Activated naive CD4-positive, alpha-beta T cell treated with anti-CD3 and anti-CD28 coated beads for 36 hours (primary cell): ENCODE measurements at regions of chr1 and their contacts with region 1.

Region 1: GRCh38 chr1:17653728-17654351 is 101.3 kb upstream of the ACTL8 start:
- DNase-seq: peak; percentile 50
- H3K4me3 Mint-ChIP-seq: no peak overlapping the region
- H3K27ac Mint-ChIP-seq: no peak overlapping the region
- H3K4me1 Mint-ChIP-seq: no peaks in the 10 kb centered on the region
- H3K27me3 Mint-ChIP-seq: no peaks in the 10 kb centered on the region

Region 2: DNA sequence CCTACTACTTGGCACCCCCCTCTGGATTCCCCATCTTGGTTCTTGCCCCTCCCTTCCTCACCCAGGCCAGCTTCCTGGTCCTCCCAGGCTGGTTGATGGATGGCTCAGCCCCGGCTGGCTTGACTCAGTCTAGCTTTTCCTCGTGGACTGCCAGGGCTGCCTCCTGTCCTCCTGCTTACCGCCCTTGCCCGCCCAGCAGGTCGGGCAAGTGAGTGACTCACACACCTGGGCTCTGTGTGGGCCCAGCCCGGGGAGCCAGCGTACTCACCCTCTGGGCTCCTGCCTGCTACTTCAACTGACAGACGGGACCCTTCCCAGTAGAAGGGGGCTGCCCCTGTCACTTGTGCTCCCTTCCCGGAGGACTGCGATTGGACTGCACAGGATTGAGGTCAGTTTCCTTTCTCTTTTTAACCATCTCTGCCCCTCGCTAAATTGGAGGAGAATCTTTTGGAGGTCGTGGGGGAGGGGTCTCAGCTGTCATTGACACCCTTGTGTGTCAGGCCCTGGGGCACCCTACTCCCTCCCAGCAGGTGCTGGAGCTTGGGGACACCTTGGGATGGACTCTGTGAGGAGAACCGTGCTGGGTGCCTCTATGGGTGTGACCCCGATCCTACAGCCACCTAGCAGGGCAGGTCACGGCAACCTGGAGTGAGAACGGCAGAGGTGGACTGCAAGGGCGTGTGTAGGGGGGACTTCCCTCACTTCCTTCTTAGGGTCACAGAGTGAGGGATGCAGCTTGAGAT is 133.6 kb before region 1 on chr1:
- CTCF ChIA-PET with region 1: no interaction called
- intact Hi-C with region 1: no loop called
- DNase-seq: no peak
- H3K4me3 Mint-ChIP-seq: no peak overlapping the region
- H3K27ac Mint-ChIP-seq: no peak overlapping the region
- H3K4me1 Mint-ChIP-seq: no peaks in the 10 kb centered on the region
- H3K27me3 Mint-ChIP-seq: peaks cover 18% of the 10 kb centered on the region

Region 3: DNA sequence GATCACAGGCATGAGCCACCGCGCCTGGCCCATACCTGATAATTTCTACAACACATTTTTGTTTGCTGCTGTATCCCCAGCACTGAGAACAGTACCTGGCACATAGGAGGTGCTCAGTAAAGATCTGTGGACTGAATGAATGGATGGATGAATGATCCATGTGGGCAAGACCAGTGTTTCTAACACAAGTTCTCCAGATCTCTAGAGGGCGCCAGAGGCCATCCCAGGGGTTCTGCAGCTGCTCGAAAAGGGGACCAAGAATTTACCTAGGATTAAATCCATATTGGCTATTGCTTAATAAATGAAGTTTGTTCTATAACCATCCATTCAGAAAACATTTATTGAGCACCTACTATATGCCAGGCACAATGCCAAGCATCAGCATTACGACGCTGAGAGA is 269.0 kb after region 1 on chr1:
- CTCF ChIA-PET with region 1: no interaction called
- intact Hi-C with region 1: loop called (anchors 10 kb)
- DNase-seq: peak; percentile 43
- H3K4me3 Mint-ChIP-seq: no peak overlapping the region
- H3K27ac Mint-ChIP-seq: no peak overlapping the region
- H3K4me1 Mint-ChIP-seq: peaks cover 2% of the 10 kb centered on the region
- H3K27me3 Mint-ChIP-seq: peaks cover 23% of the 10 kb centered on the region

Region 4: GRCh38 chr1:18309552-18310155 is 655.8 kb after region 1 on chr1:
- CTCF ChIA-PET with region 1: no interaction called
- intact Hi-C with region 1: no loop called
- DNase-seq: no peak
- H3K4me3 Mint-ChIP-seq: no peak overlapping the region
- H3K27ac Mint-ChIP-seq: no peak overlapping the region
- H3K4me1 Mint-ChIP-seq: no peaks in the 10 kb centered on the region
- H3K27me3 Mint-ChIP-seq: peaks cover 10% of the 10 kb centered on the region